ENCODE measurements at regions of chr6 and their contacts with region 1.

Region 1: DNA sequence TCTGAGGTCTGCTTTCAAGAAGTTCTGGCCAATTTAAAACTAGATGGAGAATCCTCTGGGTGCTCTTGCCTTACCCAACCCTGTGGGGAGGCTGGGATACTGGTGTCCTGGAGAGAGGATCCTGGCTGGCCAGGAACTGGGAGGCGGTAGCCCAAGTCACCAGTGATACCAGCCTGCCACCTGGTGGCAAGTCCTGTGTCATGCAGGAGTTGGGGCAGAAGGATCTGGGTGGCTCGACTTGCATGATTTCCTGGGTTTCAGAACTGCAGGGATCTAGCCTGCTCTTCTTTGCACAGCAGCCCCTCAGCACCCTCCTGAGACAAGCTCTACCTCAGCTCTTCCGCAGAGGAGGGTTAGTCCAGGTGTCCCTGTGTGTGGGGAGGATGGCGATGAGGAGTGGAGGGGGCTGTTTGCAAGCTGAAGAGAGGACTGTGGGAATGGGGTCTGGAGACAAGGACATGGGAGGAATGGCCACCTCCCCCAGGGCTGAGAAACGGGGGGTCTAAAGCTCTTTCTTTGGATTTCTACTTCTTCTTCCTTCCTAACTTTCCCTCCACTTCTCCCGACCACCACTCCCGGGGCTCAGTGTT is 4.2 kb downstream of the KCNK17 start:
- DNase-seq: peak; percentile 70
- ATAC-seq: peak; percentile 72
- H3K4me3 Mint-ChIP-seq: no peak overlapping the region
- H3K27ac Mint-ChIP-seq: no peak overlapping the region
- H3K4me1 Mint-ChIP-seq: peaks cover 18% of the 10 kb centered on the region
- H3K27me3 Mint-ChIP-seq: peaks cover 41% of the 10 kb centered on the region

Region 2: GRCh38 chr6:38871741-38872568 is 438.1 kb before region 1 on chr6:
- CTCF ChIA-PET with region 1: interaction called, 23 read pairs
- POLR2A ChIA-PET with region 1: no interaction called
- DNase-seq: peak; percentile 68
- ATAC-seq: no peak
- H3K4me3 Mint-ChIP-seq: no peak overlapping the region
- H3K27ac Mint-ChIP-seq: no peak overlapping the region
- H3K4me1 Mint-ChIP-seq: peaks cover 25% of the 10 kb centered on the region
- H3K27me3 Mint-ChIP-seq: peaks cover 7% of the 10 kb centered on the region

Region 3: DNA sequence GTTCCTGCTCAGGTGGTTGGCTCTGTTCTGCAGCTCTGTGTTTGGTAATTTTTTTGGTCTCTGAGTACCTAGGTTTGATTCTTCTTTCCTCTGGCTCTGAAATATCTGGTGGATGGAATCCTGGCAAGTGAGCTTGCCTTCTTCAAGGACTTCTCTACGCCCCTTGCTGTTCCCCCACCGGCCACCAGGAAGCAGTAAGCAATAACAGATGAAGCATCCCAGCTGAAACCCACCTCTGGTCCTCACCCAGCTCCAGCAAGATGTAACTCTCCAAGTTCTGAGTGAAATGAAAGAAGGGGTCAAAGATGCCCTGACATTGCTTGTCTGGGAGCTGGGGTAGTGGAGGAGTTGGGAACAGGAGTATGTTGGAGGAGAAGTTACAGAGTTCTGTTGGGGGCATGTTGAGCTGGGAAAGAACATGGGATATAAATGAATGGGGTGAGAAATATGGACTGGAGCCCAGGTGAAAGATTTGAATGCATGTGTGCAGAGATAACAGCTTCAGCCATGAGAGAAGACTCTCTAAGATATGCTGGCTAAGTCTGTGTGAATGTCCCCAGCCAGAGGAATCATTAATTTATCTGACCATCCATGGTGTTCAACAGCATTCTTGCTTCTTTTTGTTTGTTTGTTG is 312.8 kb before region 1 on chr6:
- CTCF ChIA-PET with region 1: interaction called, 14 read pairs
- POLR2A ChIA-PET with region 1: no interaction called
- DNase-seq: peak; percentile 35
- ATAC-seq: no peak
- H3K4me3 Mint-ChIP-seq: no peak overlapping the region
- H3K27ac Mint-ChIP-seq: no peak overlapping the region
- H3K4me1 Mint-ChIP-seq: no peaks in the 10 kb centered on the region
- H3K27me3 Mint-ChIP-seq: peaks cover 41% of the 10 kb centered on the region

Region 4: DNA sequence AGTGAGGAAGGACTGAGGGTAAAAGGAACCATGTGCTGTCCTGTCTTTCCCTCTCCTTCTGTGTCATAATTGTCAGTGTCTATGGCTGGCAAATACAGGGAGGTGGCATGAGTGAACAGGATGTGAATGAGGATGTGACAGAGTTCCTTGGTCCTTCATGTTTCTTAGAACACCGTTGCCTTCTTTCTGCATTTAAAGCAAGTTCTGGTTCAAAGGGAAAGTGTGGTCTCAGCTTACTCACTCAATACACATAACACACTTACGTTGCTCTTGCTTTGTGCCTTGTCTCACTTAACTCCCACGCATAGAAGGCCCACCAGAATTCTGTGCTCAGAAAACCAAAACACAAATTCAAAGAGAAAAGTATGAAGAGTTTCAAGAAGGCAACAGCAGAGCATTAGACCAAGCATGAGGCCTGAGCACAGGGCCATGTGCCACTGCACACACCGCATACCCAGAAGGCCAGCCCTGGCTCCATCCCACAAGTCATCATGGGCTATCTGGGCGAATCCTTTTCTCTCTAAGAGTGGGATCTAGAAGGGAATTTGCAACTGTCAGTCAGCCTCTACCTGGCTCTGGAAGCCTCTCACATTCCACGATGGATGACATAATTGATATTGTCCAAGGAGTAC is 156.2 kb before region 1 on chr6:
- CTCF ChIA-PET with region 1: interaction called, 12 read pairs
- POLR2A ChIA-PET with region 1: no interaction called
- DNase-seq: peak; percentile 28
- ATAC-seq: peak; percentile 60
- H3K4me3 Mint-ChIP-seq: no peak overlapping the region
- H3K27ac Mint-ChIP-seq: peak overlapping the region; percentile 30
- H3K4me1 Mint-ChIP-seq: peaks cover 21% of the 10 kb centered on the region
- H3K27me3 Mint-ChIP-seq: peaks cover 17% of the 10 kb centered on the region

Region 5: GRCh38 chr6:39173270-39173669 is 136.8 kb before region 1 on chr6:
- CTCF ChIA-PET with region 1: interaction called, 179 read pairs
- POLR2A ChIA-PET with region 1: no interaction called
- DNase-seq: no peak
- ATAC-seq: no peak
- H3K4me3 Mint-ChIP-seq: no peak overlapping the region
- H3K27ac Mint-ChIP-seq: no peak overlapping the region
- H3K4me1 Mint-ChIP-seq: no peaks in the 10 kb centered on the region
- H3K27me3 Mint-ChIP-seq: no peaks in the 10 kb centered on the region

Region 6: DNA sequence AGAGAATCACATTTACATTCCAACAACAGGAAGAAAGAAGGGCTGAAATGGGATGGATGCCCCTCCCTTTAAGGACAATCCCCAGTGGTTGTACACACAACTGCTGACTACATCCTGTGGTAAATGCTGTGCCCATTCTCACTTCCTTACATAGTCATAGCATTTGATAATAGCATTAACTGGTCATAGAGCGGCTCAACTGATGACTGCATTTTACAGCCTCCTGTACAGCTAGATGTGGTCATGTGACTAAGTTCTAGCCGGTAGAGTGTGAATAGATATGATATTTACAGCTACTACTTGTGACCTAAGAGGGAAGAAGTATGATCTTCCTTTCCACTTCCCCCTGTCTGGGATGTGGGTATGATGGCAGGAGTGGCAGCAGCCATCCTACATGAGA is 20.5 kb before region 1 on chr6:
- CTCF ChIA-PET with region 1: no interaction called
- POLR2A ChIA-PET with region 1: no interaction called
- DNase-seq: no peak
- ATAC-seq: no peak
- H3K4me3 Mint-ChIP-seq: no peak overlapping the region
- H3K27ac Mint-ChIP-seq: no peak overlapping the region
- H3K4me1 Mint-ChIP-seq: peaks cover 11% of the 10 kb centered on the region
- H3K27me3 Mint-ChIP-seq: peaks cover 13% of the 10 kb centered on the region

Region 7: GRCh38 chr6:39610221-39610620 is 300.2 kb after region 1 on chr6:
- CTCF ChIA-PET with region 1: no interaction called
- POLR2A ChIA-PET with region 1: no interaction called
- DNase-seq: no peak
- ATAC-seq: no peak
- H3K4me3 Mint-ChIP-seq: no peak overlapping the region
- H3K27ac Mint-ChIP-seq: no peak overlapping the region
- H3K4me1 Mint-ChIP-seq: no peaks in the 10 kb centered on the region
- H3K27me3 Mint-ChIP-seq: peaks cover 3% of the 10 kb centered on the region